GM13976 (cell line): ENCODE measurements at regions of chr9 and their contacts with region 1.

Region 1: DNA sequence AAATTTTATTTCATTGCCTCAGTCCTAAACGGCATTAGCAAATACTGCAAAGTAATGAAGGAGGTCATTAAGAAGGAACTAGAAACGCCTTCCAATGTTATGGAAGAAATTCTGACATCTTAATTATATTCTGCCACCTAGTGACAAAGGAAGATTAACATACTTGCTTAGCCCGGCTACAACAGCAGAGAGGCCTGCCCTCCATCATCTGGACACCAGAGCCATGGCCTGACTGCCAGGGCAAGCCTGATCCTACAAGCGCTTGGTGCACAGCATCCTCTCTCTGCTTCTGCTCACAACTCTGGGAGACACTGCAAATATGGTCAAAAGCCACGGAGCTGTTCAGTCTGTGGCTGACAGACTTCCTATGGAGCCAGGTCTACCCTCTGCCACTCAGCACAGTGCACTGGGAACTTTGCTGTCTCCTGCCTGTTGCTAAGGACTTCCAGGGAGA is 87.3 kb upstream of the SLC44A1 start:
- DNase-seq: peak; percentile 70
- CTCF ChIP-seq: peak; percentile 44

Region 2: GRCh38 chr9:104780799-104781395 is 376.3 kb before region 1 on chr9:
- in situ Hi-C with region 1: loop called (anchors 10 kb)
- DNase-seq: peak; percentile 14
- CTCF ChIP-seq: peak; percentile 47

Region 3: GRCh38 chr9:104863180-104863883 is 293.8 kb before region 1 on chr9:
- in situ Hi-C with region 1: loop called (anchors 10 kb)
- DNase-seq: peak; percentile 75
- CTCF ChIP-seq: peak; percentile 78

Region 4: GRCh38 chr9:105414947-105415661 is 257.9 kb after region 1 on chr9:
- in situ Hi-C with region 1: loop called (anchors 5 kb)
- DNase-seq: peak; percentile 68
- CTCF ChIP-seq: peak; percentile 62